ENCODE measurements at regions of chr15 and their contacts with region 1.

Region 1: GRCh38 chr15:84006421-84006820 is 229.2 kb upstream of the GOLGA6L4 start:
- DNase-seq: no peak
- CTCF ChIP-seq: no peak

Region 2: DNA sequence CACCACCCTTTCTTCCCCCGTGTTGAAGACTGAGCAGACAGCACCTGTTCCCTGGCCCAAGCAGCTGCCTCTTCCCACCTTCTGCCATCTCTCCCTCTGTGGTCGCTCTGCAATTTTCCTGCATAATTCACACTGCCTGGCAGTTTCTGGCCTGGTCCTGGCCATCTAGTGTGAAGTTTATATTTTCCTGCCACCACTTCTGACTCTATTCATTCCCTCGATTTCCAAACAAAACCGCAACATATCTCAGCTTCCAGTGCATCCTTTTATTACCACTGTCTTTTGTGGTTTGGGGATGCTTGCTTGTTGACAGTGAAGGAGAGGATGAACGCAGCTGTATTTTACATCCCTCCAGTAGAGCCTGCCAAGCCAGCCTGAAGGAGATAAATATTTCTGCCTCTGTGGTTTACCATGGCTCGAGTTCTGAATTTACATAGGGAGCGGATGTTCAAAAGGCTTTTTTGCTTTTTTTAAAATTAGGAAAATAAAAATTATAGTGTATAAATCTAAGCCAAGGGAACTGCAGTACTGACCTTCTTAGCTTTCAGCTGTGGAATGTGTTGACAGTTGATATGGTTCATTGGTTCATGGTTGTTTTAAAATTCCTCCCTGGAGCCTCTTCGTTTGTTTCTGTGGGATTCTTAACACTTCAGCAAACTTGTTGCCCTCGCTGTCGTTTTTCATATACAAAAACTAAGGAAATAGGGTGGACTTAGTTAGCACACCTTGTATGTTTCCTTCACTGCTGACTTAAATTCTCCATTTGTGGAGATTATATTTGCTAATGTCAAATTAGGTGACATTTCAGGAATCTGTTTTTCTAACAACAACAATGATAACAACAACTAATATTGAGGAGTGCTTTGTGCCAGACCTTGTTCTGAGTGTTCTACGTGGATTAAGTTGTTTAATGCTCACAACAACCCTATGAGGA is 102.0 kb before region 1 on chr15:
- CTCF ChIA-PET with region 1: no interaction called
- POLR2A ChIA-PET with region 1: no interaction called
- DNase-seq: no peak
- CTCF ChIP-seq: no peak

Region 3: GRCh38 chr15:83970295-83970890 is 36.0 kb before region 1 on chr15:
- CTCF ChIA-PET with region 1: no interaction called
- POLR2A ChIA-PET with region 1: no interaction called
- DNase-seq: no peak
- CTCF ChIP-seq: no peak

Region 4: GRCh38 chr15:83992324-83993031 is 13.9 kb before region 1 on chr15:
- CTCF ChIA-PET with region 1: interaction called, 21 read pairs
- POLR2A ChIA-PET with region 1: no interaction called
- DNase-seq: peak; percentile 38
- CTCF ChIP-seq: no peak

Measured in GM10248 (cell line).